K562 (cell line): ENCODE measurements at regions of chr17 and their contacts with region 1.

Region 1: DNA sequence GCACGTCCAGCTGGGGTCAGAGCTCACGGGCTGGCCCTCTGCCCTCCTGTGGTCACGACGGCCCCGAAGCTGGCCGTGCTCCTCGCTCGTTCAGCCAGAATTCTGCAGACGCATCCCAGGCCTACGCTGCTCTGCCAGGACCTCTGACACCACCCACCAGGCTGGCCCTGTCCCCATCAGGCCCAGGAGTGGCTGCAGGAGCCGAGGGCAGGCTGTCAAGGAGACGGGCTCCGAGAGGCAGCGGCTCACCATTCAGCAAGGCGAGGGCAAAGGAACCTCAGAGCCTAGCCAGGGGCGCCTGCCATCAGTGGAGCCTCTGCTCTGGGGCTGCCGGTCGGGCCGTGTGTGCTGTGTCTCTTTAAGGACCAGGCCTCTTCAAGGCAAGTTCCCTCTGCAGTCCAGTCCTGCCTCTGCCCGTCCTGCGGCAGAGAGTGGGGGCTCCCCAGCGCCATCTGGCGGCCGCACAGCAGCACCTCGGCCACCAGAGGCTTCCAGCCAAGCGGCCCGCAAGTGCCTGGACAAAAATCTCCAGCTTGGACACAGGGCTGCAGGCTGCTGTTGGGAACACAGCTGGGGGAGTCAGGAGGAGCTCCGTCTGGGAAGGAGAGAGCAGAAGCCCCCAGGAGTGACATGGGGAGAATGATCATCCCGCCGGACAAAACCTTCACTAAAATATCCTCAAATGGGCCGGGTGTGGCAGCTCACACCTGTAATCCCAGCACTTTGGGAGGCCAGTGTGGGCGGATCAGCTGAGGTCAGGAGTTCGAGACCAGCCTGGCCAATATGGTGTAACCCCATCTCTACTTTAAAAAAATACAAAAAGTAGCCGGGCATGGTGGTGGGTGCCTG is 7.4 kb upstream of the ABR start:
- DNase-seq: peak; percentile 71 to 74 (median 73)
- ATAC-seq: peak; percentile 100
- H3K4me3 ChIP-seq: no peak overlapping the region
- H3K27ac ChIP-seq: no peak overlapping the region
- H3K4me1 ChIP-seq: peaks cover 0 to 10% of the 10 kb centered on the region in 2 experiments; a peak in 2 of 5 replicates
- H3K27me3 ChIP-seq: peaks cover 11 to 67% of the 10 kb centered on the region in 2 experiments; a peak in 3 of 5 replicates
- CTCF ChIP-seq: peak; percentile 84 to 93 (median 86)
- EP300 ChIP-seq: no peak
- POLR2A ChIP-seq: no peak
- RAD21 ChIP-seq: peak; percentile 64 to 83

Region 2: DNA sequence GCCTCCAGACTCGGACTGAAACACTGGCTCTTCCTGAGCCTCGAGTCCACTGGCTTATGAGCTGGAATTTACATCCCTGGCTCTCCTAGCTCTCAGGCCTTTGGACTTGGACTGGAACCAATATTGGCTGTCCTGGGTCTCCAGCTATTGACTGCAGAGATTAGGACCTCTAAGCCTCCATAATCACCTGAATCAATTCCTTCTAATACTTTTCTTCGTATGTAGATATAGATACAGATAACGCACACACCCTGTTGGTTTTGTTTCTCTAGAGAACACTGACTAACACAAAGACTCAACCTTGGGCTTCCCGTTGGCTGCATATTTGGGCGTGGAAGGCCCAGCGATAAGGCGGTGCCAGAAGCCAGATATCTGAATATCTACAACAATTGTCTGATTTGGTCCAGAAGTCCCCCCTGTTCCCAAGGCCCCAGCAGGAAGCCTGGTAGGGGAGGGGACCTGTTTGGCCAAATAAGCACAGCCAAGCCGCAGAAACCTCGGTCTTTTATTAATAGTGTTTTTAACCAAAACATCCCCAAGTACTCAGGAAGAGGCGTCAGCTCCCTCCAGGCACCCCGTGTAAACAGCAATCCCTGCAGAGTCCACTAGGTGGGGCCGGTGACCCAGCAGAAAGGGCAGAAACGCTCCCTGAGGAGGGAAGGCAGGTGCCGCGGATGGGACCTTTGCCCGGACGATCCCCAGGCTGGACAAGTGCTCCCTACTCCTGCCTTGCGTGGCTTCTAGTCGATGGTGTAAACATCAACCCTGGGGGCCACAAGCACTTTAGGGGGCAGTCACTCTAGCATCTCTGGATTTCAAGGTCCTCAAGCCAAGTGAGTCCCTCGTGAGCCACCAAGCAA is 64.4 kb before region 1 on chr17:
- CTCF ChIA-PET with region 1: interaction called, 13 read pairs
- POLR2A ChIA-PET with region 1: interaction called, 3 read pairs
- in situ Hi-C with region 1: no loop called
- intact Hi-C with region 1: loop called (anchors 2 kb)
- DNase-seq: peak; percentile 69 to 81 (median 80)
- ATAC-seq: peak; percentile 96
- H3K4me3 ChIP-seq: no peak overlapping the region
- H3K27ac ChIP-seq: no peak overlapping the region
- H3K4me1 ChIP-seq: peaks cover 0 to 14% of the 10 kb centered on the region in 2 experiments; a peak in 2 of 5 replicates
- H3K27me3 ChIP-seq: peaks cover 13 to 55% of the 10 kb centered on the region in 2 experiments; a peak in 4 of 5 replicates
- CTCF ChIP-seq: peak; percentile 82 to 85 (median 84)
- EP300 ChIP-seq: no peak
- POLR2A ChIP-seq: no peak
- RAD21 ChIP-seq: peak; percentile 74 to 80